ENCODE measurements at regions of chr16 and their contacts with region 1.

Region 1: GRCh38 chr16:31108035-31108793 is at the start of gene BCKDK:
- DNase-seq: peak; percentile 57
- H3K4me3 ChIP-seq: peak within 1 kb of the TSS; percentile 80 to 89 (median 81)
- H3K27ac ChIP-seq: peak within 1 kb of the TSS; percentile 30
- H3K4me1 ChIP-seq: peaks cover 10% of the 10 kb centered on the region
- H3K27me3 ChIP-seq: no peaks in the 10 kb centered on the region
- CTCF ChIP-seq: no peak
- total RNA-seq, gene BCKDK: 26.3 to 47.8 TPM

Region 2: DNA sequence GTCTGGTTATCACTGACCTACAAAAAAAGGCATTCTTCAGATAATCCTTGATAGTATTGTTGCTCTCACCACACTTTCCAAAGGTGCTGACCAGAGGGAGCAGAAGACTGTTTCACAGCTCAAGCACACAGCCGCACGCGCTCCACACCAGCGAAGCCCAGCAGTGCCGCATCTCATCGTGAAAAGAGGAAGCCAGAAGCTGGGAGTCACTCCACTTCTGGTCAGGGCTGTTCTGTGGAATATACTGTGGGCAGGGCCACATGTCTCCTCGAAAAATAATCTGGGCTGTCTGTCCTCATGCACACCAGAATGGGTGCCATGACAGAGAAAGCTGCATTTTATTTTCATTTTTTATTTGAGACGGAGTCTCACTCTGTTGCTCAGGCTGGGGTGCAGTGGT is 48.9 kb after region 1 on chr16:
- CTCF ChIA-PET with region 1: interaction called, 10 read pairs
- dilution Hi-C with region 1: no loop called
- in situ Hi-C with region 1: loop called in 1 of 2 experiments (anchors 5 kb)
- intact Hi-C with region 1: no loop called
- DNase-seq: no peak
- H3K4me3 ChIP-seq: no peak overlapping the region
- H3K27ac ChIP-seq: no peak overlapping the region
- H3K4me1 ChIP-seq: no peaks in the 10 kb centered on the region
- H3K27me3 ChIP-seq: no peaks in the 10 kb centered on the region
- CTCF ChIP-seq: no peak

Measured in mammary epithelial cell (primary cell).